Common myeloid progenitor, CD34-positive (primary cell): ENCODE measurements at regions of chr16 and their contacts with region 1.

Region 1: DNA sequence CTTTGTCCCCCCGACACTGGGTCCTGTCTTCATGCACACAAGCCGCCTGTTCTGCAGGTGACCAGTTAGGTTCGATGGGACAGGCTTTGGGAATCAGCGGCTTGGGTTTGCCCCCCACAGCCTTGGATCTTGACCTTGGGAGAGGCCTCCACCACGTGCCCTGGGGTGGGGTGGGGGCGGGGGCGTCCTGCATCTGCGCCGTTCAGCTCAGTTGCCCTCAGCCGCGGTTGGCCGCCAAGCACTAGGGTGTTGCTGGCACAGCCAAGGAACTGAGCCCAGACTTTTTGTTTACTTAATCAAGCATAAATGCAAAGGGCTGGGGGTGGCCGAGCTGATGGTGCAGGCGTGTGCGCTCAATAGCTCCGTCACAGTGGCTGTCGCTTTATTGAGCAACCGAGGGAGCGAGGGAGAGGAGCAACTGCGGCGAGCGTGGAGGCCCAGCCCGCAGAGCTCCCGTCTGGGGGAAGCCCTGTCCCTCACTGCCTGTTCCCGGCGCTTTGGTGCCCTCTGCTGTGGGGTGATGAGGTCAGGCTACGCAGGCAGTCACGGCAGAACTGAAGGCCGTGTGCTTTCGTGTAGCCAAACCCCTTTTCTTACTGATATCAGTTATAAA is 33.9 kb downstream of the JPH3 start:
- DNase-seq: peak; percentile 73 to 84 (median 80)
- H3K4me3 ChIP-seq: peak overlapping the region in 5 of 7 experiments; percentile 43 to 69 (median 48)
- H3K27ac ChIP-seq: no peak overlapping the region
- H3K4me1 ChIP-seq: peaks cover 0 to 19% (median 10%) of the 10 kb centered on the region in 4 experiments
- H3K27me3 ChIP-seq: peaks cover 0 to 29% (median 7%) of the 10 kb centered on the region in 5 experiments

Region 2: DNA sequence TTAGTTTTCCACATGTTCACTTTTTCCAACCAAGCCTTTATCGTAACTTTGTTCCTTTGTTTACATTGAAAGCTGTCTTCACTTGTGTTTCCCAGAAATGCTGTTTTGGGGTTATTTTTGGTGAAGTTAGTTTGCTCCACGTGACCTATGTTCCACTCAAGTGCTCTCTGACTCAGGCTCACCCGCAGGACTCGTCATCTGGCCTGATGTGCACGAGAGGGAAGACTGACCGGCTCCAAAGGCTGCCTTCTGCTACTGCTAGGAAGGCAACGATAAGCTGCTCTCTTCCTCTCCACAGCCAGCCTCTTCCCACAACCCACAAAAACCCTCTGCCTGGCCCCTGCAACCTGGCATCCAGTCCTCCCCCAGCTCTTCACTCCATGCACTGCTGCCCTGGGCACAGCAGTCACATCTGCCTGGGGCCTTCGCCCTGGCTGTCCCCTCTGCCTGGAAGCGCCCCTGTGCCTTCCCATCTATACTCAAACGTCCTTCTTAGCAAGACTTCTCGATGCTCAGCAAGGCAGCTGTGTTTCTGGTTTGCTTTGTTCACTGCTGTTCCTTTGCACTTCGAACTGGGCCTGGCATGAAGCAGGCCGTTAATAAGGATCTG is 171.4 kb before region 1 on chr16:
- CTCF ChIA-PET with region 1: interaction called, 13 read pairs
- POLR2A ChIA-PET with region 1: no interaction called
- DNase-seq: peak; percentile 68 to 91 (median 86)
- H3K4me3 ChIP-seq: peak overlapping the region in 6 of 7 experiments; percentile 16 to 64 (median 50)
- H3K27ac ChIP-seq: peak overlapping the region; percentile 51 to 78
- H3K4me1 ChIP-seq: peaks cover 14 to 72% (median 56%) of the 10 kb centered on the region in 4 experiments
- H3K27me3 ChIP-seq: no peaks in the 10 kb centered on the region

Region 3: DNA sequence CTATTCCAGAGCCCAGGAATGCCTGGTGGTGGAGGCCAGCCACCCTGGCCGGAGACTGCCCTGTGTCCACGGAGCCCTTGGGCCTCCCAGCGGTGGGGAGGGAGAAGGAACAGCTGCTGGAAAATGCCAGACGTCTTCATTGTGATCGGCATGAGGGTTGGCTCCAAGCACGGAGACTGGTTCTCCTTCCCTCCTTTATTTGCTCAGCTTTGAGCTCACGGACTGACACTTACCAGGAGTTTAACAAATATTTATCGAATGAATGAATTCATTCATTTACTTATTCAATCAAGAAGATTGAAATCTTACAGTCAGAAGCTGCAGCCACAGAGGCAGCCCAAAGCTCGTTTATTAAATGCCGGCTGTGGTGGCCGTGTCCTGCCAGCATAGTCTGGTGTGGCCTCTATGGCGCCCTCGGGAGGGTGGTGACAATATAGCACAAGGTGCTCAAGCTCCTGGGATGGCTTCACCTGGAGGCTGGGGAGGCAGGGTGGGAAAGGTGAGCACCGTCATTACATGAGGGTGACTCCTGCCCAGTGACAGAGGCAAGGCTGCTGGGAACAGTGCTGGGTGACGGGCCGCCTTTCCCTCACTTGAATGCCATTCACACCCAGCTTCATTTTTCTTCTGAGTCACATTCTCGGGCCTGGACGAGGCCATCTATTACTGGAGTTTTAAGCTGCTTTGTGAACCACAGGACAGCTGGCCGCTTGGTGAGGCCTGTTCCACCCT is 64.9 kb before region 1 on chr16:
- CTCF ChIA-PET with region 1: interaction called, 21 read pairs
- POLR2A ChIA-PET with region 1: no interaction called
- DNase-seq: peak in 2 of 3 donors; percentile 29 to 31
- H3K4me3 ChIP-seq: no peak overlapping the region
- H3K27ac ChIP-seq: no peak overlapping the region
- H3K4me1 ChIP-seq: no peaks in the 10 kb centered on the region
- H3K27me3 ChIP-seq: peaks cover 0 to 28% (median 6%) of the 10 kb centered on the region in 5 experiments

Region 4: GRCh38 chr16:87586201-87586782 is 49.9 kb before region 1 on chr16:
- CTCF ChIA-PET with region 1: interaction called, 63 read pairs
- POLR2A ChIA-PET with region 1: no interaction called
- DNase-seq: no peak
- H3K4me3 ChIP-seq: no peak overlapping the region
- H3K27ac ChIP-seq: no peak overlapping the region
- H3K4me1 ChIP-seq: no peaks in the 10 kb centered on the region
- H3K27me3 ChIP-seq: peaks cover 0 to 80% (median 14%) of the 10 kb centered on the region in 5 experiments

Region 5: DNA sequence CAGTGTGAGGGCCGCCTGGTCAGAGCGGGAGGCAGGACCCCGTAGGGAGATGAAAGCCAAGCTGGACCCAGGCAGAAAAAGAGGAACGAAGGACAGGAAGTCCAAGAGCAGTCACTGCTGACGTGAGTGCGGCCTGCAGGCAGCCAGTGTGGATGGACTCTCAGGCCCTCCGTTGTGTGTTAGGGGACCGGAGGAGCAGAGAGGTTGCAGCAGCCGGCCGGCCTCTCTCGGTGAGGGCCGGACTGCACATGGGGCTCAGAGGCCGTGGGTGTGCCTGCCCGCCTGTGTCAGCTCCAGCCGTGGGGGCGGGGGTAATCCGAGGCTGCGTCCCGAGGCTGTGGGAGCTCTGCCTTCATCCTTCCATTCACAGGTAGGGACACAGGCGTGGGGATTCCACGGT is 33.5 kb after region 1 on chr16:
- CTCF ChIA-PET with region 1: no interaction called
- POLR2A ChIA-PET with region 1: no interaction called
- DNase-seq: no peak
- H3K4me3 ChIP-seq: no peak overlapping the region
- H3K27ac ChIP-seq: no peak overlapping the region
- H3K4me1 ChIP-seq: no peaks in the 10 kb centered on the region
- H3K27me3 ChIP-seq: peaks cover 0 to 2% (median 0%) of the 10 kb centered on the region in 5 experiments